Naive thymus-derived CD4-positive, alpha-beta T cell (primary cell): ENCODE measurements at regions of chr11 and their contacts with region 1.

Region 1: GRCh38 chr11:96314326-96315020 is 28.5 kb downstream of the MAML2 start:
- DNase-seq: peak in 1 of 9 donors; percentile 9
- ATAC-seq: peak; percentile 51
- H3K4me3 ChIP-seq: no peak overlapping the region
- H3K4me3 Mint-ChIP-seq: peak overlapping the region; percentile 14 to 71 (median 60)
- H3K27ac ChIP-seq: peak overlapping the region; percentile 56
- H3K27ac Mint-ChIP-seq: peak overlapping the region; percentile 64 to 95 (median 91)
- H3K4me1 ChIP-seq: peaks cover 27 to 67% of the 10 kb centered on the region in 2 donors
- H3K4me1 Mint-ChIP-seq: peaks cover 53 to 100% (median 98%) of the 10 kb centered on the region in 7 donors
- H3K27me3 ChIP-seq: no peaks in the 10 kb centered on the region
- H3K27me3 Mint-ChIP-seq: no peaks in the 10 kb centered on the region

Region 2: GRCh38 chr11:96324960-96325359 is 10.5 kb after region 1 on chr11:
- CTCF ChIA-PET with region 1: interaction called, 3 read pairs
- POLR2A ChIA-PET with region 1: interaction called, 4 read pairs
- intact Hi-C with region 1: loop called in 1 of 2 experiments (anchors 1 kb)
- DNase-seq: no peak
- ATAC-seq: no peak
- H3K4me3 ChIP-seq: no peak overlapping the region
- H3K4me3 Mint-ChIP-seq: peak overlapping the region in 5 of 10 donors; percentile 2 to 56 (median 23)
- H3K27ac ChIP-seq: peak overlapping the region; percentile 8
- H3K27ac Mint-ChIP-seq: peak overlapping the region in 8 of 9 donors; percentile 4 to 89 (median 71)
- H3K4me1 ChIP-seq: peaks cover 0 to 56% of the 10 kb centered on the region in 2 donors
- H3K4me1 Mint-ChIP-seq: peaks cover 36 to 99% (median 90%) of the 10 kb centered on the region in 7 donors
- H3K27me3 ChIP-seq: no peaks in the 10 kb centered on the region
- H3K27me3 Mint-ChIP-seq: no peaks in the 10 kb centered on the region